Activated CD4-positive, alpha-beta memory T cell treated with anti-CD3 and anti-CD28 coated beads for 36 hours (primary cell): ENCODE measurements at regions of chr10 and their contacts with region 1.

Region 1: DNA sequence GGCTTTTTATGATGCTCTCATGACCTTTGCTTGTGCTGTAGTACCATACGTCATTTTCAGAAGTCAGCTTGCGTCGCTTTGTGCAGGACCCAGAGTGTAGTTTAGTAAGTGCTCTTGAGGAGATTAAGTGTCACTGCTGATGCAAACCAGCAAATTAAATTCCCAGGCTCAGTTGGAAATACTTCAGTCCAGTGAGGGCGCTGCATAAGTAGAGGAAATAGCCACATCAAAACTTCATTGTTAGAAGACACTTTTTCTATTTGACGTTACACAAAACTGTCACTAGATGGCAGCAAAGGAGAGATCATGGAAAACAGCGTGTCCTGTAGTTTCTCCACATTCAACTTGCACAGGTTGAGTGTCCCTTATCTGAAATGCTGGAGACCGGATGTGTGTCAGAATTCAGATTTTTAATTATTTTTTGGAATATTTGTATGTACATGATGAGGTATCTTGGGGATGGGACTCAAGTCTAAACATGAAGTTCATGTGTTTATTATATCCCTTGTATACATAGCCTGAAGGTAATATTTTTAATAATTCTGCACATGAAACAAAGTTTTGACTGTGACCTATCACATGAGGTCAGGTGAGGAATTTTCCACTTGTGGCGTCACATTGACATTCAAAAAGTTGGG is 7.9 kb downstream of the ZNF22 start:
- DNase-seq: no peak
- H3K4me3 Mint-ChIP-seq: no peak overlapping the region
- H3K27ac Mint-ChIP-seq: no peak overlapping the region
- H3K4me1 Mint-ChIP-seq: peaks cover 5% of the 10 kb centered on the region
- H3K27me3 Mint-ChIP-seq: no peaks in the 10 kb centered on the region

Region 2: DNA sequence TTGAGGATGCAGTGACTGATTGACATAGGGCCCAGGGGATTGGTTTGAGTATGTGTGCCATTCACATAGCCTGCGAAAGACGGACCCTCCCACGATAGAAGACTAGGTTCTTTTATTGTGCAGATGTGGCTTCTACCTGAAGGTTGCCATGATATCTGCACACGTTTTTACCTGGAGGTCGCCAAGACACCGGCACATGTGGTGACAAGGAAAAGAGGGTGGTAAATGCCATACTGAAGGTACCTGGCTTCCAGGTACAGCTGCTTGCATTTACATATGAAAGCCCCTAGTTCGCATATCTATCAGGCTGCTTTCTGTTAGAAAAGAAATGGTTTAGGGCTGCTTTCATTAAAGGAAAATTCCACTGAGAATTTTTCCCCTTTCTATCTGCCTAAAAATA is 35.6 kb after region 1 on chr10:
- CTCF ChIA-PET with region 1: no interaction called
- POLR2A ChIA-PET with region 1: no interaction called
- intact Hi-C with region 1: no loop called
- DNase-seq: no peak
- H3K4me3 Mint-ChIP-seq: no peak overlapping the region
- H3K27ac Mint-ChIP-seq: no peak overlapping the region
- H3K4me1 Mint-ChIP-seq: no peaks in the 10 kb centered on the region
- H3K27me3 Mint-ChIP-seq: peaks cover 4% of the 10 kb centered on the region

Region 3: GRCh38 chr10:45235798-45236231 is 227.2 kb after region 1 on chr10:
- CTCF ChIA-PET with region 1: interaction called, 6 read pairs
- POLR2A ChIA-PET with region 1: no interaction called
- intact Hi-C with region 1: loop called (anchors 5 kb)
- DNase-seq: no peak
- H3K4me3 Mint-ChIP-seq: no peak overlapping the region
- H3K27ac Mint-ChIP-seq: no peak overlapping the region
- H3K4me1 Mint-ChIP-seq: no peaks in the 10 kb centered on the region
- H3K27me3 Mint-ChIP-seq: peaks cover 8% of the 10 kb centered on the region

Region 4: GRCh38 chr10:45249978-45250693 is 241.5 kb after region 1 on chr10:
- CTCF ChIA-PET with region 1: interaction called, 3 read pairs
- POLR2A ChIA-PET with region 1: no interaction called
- intact Hi-C with region 1: loop called (anchors 5 kb)
- DNase-seq: no peak
- H3K4me3 Mint-ChIP-seq: peak overlapping the region; percentile 35
- H3K27ac Mint-ChIP-seq: no peak overlapping the region
- H3K4me1 Mint-ChIP-seq: peaks cover 11% of the 10 kb centered on the region
- H3K27me3 Mint-ChIP-seq: peaks cover 2% of the 10 kb centered on the region

Region 5: DNA sequence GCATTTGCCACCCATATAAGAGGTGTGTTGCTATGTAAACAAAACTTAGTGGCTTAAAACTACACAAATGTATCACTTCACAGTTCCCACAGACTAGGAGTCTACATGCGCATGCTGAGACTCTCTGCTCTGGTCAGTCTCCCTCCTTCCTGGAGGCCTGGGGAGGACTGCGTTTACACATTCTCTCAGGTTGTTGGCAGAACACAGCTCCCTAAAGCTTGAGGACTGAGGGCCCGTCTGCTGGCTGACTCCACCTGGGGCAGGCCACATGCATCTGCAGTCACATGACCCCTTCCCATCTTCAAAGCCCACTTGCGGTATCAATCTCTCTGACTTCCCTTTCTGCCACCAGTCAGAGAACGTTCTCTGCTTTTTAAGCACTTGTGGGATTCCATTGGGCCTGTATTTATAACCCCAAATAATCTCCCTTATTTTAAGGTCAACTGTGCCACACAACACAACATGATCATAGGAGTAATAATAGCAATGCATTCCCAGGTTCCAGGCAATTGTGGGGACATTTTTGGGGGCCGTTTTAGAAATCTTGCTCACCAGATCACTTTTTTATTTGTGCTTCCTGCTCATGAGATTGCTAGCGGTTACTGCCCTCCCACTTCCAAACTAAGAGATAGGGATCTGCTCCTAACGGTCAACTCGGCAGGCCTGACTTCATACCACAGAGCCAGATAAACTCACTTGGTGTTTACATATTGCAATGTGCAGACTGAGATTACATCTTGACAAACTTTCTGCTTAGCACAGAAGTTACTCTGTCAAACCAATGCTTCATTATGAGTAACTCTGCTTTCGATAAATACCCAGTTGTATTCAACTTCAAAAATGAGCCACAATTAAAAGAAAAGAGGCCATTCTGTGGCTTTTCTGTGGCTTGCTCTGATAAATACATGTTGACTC is 461.7 kb after region 1 on chr10:
- CTCF ChIA-PET with region 1: no interaction called
- POLR2A ChIA-PET with region 1: no interaction called
- intact Hi-C with region 1: loop called (anchors 10 kb)
- DNase-seq: peak; percentile 58
- H3K4me3 Mint-ChIP-seq: peak overlapping the region; percentile 6
- H3K27ac Mint-ChIP-seq: peak overlapping the region; percentile 72
- H3K4me1 Mint-ChIP-seq: peaks cover 22% of the 10 kb centered on the region
- H3K27me3 Mint-ChIP-seq: no peaks in the 10 kb centered on the region

Region 6: GRCh38 chr10:45594276-45595106 is 585.8 kb after region 1 on chr10:
- CTCF ChIA-PET with region 1: no interaction called
- POLR2A ChIA-PET with region 1: no interaction called
- intact Hi-C with region 1: loop called (anchors 10 kb)
- DNase-seq: peak; percentile 93
- H3K4me3 Mint-ChIP-seq: peak overlapping the region; percentile 80
- H3K27ac Mint-ChIP-seq: peak overlapping the region; percentile 57
- H3K4me1 Mint-ChIP-seq: peaks cover 25% of the 10 kb centered on the region
- H3K27me3 Mint-ChIP-seq: peaks cover 1% of the 10 kb centered on the region

Region 7: DNA sequence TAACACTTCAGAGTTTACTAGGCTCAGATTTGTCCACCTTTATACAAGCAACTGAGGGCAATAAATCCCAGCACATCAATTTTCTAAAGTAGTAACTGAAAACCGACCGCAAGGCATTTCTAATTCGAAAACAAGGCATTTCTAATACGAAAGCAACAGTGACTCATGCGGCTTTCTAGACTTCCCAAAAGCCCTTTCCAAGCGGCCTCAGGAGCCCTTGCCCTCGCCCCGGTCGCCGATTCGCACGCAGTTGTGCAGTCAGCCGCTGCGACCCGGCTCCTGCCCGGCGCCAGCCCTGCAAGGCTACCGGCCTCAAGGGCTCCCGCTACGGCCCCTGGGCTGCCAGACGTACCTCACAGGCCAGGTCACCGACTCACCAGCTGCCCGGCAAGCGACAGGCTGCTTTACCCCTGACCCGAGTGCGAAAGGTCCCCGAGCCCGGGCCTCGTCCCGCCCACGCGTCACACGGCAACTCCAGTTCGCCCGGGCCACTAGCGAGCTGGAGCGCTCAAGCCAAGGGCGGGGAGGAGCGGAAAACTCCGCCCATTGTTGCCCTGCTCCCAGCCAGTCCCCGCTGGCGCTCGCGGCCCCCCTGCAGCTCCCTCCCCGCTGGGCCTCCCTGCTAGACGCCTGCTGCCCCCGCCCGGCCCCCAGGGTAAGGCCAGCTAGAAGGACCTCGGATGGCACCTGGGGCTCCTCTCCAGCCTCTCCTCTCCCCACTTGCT is 1014.5 kb after region 1 on chr10:
- CTCF ChIA-PET with region 1: no interaction called
- POLR2A ChIA-PET with region 1: no interaction called
- intact Hi-C with region 1: loop called (anchors 10 kb)
- DNase-seq: peak; percentile 91
- H3K4me3 Mint-ChIP-seq: peak overlapping the region; percentile 78
- H3K27ac Mint-ChIP-seq: peak overlapping the region; percentile 86
- H3K4me1 Mint-ChIP-seq: peaks cover 82% of the 10 kb centered on the region
- H3K27me3 Mint-ChIP-seq: no peaks in the 10 kb centered on the region